GM18951 (cell line): ENCODE measurements at regions of chr17 and their contacts with region 1.

Region 1: GRCh38 chr17:50834429-50835300 is 721 bp upstream of the WFIKKN2 start:
- POLR2A ChIP-seq: no peak

Region 2: DNA sequence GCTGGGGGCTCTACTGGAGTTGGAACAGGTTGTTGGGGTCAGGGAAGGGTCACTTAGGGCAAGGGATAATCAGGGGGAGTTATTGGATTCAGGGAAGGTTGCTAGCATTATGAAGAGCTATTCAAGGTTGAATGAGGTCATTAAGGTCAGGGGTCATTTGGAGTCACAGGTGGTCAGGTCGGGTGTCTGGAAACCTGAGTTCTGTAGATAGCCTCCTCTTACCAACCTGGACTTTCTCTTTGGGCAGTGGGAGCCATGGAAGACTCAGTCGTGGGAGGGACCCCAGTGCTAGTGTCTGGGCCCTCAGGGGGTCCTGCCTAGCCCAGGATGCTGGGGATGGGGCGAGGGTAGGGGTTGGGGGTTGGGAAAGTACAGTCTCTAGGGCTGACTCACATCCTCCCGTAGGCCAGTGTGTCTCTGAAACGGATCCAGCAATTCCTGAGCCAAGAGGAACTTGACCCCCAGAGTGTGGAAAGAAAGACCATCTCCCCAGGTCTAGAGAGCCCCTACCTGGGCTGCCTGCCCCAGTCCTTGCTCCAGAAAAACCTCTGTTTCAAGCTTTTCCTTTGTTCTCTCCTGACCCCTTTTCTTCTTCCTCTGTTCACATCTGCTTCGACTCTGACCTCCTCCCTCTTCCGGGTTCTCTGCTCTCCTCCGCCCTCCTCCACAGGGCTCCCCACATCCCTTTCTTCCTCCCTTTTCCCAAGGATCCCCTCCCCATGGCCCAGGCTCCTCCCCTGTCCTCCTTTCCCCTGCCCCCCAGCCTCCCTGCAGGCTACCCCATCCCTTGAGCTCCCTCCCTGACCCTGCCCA is 166.4 kb before region 1 on chr17:
- in situ Hi-C with region 1: no loop called
- POLR2A ChIP-seq: no peak

Region 3: DNA sequence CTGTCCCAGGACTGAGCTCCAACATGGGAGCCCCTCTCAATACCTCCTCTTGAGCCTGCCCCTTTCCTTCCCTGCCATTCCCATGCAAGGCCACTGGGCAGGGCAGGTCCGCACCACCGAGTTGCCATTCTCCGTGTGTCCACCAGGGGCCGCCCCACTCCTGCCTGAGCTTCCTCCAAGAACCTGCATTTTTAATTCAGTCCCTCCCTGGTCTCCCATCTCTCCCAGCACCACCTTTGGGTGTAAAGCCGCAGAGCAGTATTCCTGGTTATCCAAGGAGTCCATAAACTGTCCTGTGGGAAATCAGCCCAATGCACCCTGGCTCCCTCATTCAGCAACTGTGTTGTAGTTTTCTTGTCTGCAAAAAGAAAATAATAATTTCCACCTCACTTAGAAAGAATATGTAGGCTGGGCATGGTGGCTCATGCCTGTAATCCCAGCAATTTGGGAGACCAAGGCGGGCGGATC is 51.4 kb before region 1 on chr17:
- in situ Hi-C with region 1: loop called (anchors 10 kb)
- POLR2A ChIP-seq: no peak